Posterior vena cava (tissue), 2 donors: ENCODE measurements at regions of chr10 and their contacts with region 1.

Region 1: GRCh38 chr10:34507217-34507616 is 307.9 kb downstream of the PARD3 start:
- DNase-seq: no peak

Region 2: DNA sequence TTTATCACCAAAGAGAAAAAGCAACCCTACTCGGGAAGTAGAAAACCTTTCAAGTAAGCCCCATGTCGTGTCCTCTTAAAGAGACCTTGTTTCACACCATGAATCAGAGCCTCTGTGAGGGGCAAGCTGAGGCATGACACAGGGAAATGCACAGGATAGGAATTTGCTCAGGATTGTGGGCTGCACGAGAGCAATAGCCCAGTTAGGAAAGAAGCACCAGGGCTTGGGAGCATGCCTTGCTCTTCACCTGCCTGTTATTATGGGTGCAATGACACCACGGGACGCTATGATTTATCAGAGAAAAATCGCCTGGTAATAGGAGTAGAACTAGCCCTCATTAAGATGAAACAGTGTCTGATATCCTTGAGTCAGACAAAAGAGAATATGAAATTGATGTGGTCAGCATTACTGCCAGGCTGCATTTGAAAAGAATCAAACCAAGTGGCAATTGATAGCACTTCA is 609.9 kb before region 1 on chr10:
- intact Hi-C with region 1: loop called in 1 of 2 experiments (anchors 5 kb)
- DNase-seq: no peak

Region 3: GRCh38 chr10:34078017-34078744 is 429.0 kb before region 1 on chr10:
- intact Hi-C with region 1: no loop called
- DNase-seq: no peak

Region 4: GRCh38 chr10:34555653-34556052 is 48.4 kb after region 1 on chr10:
- intact Hi-C with region 1: no loop called
- DNase-seq: no peak